ENCODE measurements at regions of chr17 and their contacts with region 1.

Region 1: DNA sequence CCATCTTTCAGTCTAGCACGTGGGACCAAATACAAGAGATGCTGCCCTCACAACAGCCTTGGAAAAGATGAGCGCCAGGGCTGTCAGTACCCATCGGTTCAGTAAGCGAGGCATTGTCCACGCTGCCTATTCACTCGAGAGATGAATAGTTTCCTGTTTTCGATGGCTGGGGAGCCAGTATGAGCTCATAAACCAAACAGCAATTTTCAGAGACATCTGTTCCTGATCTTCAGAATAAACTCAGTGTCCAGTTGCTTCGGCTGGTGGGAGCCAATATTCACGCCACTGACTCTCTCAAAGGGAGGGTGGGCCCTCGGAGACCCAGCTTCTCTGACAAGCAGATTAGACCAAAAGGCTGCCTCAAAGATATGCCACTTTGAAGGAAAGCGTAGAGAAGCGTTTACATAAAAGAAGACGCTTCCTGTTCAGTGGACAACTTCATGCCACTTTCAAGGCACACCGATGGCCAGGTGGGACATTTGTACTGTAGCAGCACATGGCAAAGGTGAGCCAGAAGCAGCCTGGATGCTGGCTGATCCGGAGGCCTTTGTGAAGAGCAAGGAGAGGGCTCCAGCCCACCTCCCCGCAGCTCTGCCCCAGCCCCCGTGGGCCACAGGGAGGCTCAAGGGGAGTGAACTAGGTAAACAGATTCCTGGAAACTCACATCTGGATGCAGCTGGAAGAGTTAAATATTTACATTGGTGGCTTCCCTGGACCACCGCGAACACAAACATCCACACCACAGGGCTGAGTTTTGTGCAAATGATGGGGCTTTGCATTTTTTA is 6.0 kb downstream of the TIMM22 start:
- DNase-seq: peak; percentile 75
- H3K4me3 ChIP-seq: no peak overlapping the region; the same call in 1 of the 2 replicates
- H3K27ac ChIP-seq: peak overlapping the region; percentile 92
- H3K27me3 ChIP-seq: no peaks in the 10 kb centered on the region
- CTCF ChIP-seq: no peak

Region 2: DNA sequence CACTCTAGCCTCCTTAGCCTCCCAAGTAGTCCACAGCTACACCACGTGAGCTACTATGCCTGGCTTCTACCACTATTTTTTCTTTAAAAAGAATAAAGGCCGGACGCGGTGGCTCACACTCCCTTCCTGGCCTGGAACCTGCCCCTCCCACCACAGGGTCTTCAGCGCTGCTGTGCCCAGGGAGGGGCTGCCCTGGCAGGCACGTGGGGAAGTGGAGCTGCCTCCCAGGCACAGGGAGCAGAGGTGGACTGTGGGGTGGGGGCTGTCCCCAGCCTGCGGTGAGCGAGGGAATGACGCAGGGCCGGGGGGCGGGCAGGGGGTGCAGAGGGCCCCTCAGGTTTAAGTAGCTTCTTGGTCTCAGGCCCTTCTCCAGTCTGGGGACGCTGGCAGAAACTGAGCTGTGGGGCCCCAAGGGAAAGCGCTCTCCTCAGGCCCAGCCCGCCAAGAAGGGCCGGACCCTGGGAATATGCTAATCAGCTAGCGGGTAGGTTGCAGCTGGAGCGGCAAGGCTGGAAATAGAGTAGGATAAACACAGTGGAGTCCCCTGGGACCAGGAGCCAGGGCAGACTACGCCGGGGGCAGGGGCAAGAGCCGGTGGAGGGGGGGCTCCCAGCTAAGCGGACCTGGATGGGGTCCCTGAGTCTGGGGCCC is 40.8 kb after region 1 on chr17:
- CTCF ChIA-PET with region 1: interaction called, 6 read pairs
- POLR2A ChIA-PET with region 1: interaction called, 10 read pairs
- DNase-seq: no peak
- H3K4me3 ChIP-seq: no peak overlapping the region
- H3K27ac ChIP-seq: no peak overlapping the region
- H3K27me3 ChIP-seq: no peaks in the 10 kb centered on the region
- CTCF ChIP-seq: no peak